Activated T-helper 1 cell treated with anti-CD3 and anti-CD28 coated beads, Interleukin-12 subunit alpha, Interleukin-12 subunit beta, Interleukin-2, Interleukin-4 antibody, amounts not matched to agents 30 ng/mL and 10 ng/mL and 1 ng/mL, durations not matched to agents 14 hours and 24 hours and 36 hours (primary cell): ENCODE measurements at regions of chr17 and their contacts with region 1.

Region 1: DNA sequence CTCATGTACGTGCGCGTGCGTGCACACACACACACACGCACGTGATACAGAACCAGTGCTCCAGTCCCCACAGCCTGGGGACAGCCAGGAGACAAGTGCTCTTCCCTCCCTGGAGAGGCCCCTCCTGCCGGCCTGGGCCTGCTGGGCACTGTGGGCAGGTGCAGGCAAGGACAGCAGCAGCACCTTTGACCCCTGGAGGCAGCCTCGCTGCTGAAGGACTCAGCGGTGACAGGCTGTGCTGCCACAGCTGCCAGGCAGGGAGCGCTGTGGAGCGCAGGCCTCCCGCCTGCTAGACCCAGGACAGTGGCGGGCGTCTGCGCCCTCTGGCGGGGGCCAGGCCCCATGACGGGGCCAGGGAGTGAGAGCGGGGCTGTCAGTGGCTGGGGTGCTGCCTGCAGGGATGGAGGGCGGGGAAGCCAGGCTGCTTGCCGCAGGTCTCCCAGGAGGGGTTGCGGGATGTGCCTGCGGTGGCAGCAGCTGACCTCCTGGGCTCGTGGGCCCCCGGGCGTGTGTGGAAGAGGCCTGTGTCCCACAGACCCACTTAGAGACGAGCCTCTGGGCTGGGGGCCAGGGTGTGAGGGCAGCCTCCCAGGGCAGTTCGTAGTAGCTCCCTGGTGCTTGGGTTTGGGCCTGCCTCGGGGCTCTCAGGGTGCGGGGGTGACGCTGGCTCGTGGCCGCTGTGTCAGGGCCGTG is 63.5 kb upstream of the PVALEF start:
- DNase-seq: peak; percentile 86
- H3K4me3 Mint-ChIP-seq: no peak overlapping the region
- H3K27ac Mint-ChIP-seq: no peak overlapping the region
- H3K4me1 Mint-ChIP-seq: peaks cover 2% of the 10 kb centered on the region
- H3K27me3 Mint-ChIP-seq: peaks cover 1% of the 10 kb centered on the region

Region 2: GRCh38 chr17:81018044-81018802 is 83.5 kb before region 1 on chr17:
- intact Hi-C with region 1: loop called (anchors 1 kb)
- DNase-seq: peak; percentile 30
- H3K4me3 Mint-ChIP-seq: peak overlapping the region; percentile 82
- H3K27ac Mint-ChIP-seq: peak overlapping the region; percentile 97
- H3K4me1 Mint-ChIP-seq: peaks cover 31% of the 10 kb centered on the region
- H3K27me3 Mint-ChIP-seq: no peaks in the 10 kb centered on the region

Region 3: GRCh38 chr17:81119223-81120148 is 17.7 kb after region 1 on chr17:
- intact Hi-C with region 1: no loop called
- DNase-seq: peak; percentile 88
- H3K4me3 Mint-ChIP-seq: peak overlapping the region; percentile 72
- H3K27ac Mint-ChIP-seq: peak overlapping the region; percentile 84
- H3K4me1 Mint-ChIP-seq: no peaks in the 10 kb centered on the region
- H3K27me3 Mint-ChIP-seq: no peaks in the 10 kb centered on the region